Gastrocnemius medialis (tissue), 4 donors: ENCODE measurements at regions of chr6 and their contacts with region 1.

Region 1: DNA sequence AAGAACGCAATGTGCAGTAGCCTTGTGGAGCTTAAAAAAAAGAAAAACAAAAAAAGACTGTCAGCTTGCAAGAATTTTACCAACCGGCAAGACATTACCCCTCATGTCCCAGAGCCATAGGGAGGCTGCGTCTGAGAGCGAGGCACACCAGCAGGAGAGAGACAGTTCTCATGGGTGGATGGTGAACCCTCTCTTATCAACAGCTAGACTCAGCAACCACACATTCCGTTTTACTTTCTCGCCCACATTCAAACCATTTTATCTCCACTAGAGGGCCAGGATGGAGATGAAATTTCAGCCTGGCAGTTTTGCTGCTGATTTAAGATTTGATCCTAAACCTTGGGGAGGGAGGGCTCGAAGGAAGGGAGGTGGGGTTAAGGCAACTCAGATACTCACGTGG is 247.0 kb downstream of the ATXN1 start:
- DNase-seq: no peak
- ATAC-seq: peak in 1 of 2 donors; percentile 58
- H3K4me3 ChIP-seq: no peak overlapping the region
- H3K27ac ChIP-seq: no peak overlapping the region
- H3K4me1 ChIP-seq: peaks cover 37% of the 10 kb centered on the region in 2 donors
- H3K27me3 ChIP-seq: no peaks in the 10 kb centered on the region
- CTCF ChIP-seq: peak; percentile 33 to 50 (median 36)
- POLR2A ChIP-seq: no peak

Region 2: GRCh38 chr6:16649241-16649640 is 135.0 kb after region 1 on chr6:
- in situ Hi-C with region 1: no loop called
- intact Hi-C with region 1: loop called (anchors 5 kb)
- DNase-seq: no peak
- ATAC-seq: no peak
- H3K4me3 ChIP-seq: no peak overlapping the region
- H3K27ac ChIP-seq: no peak overlapping the region
- H3K4me1 ChIP-seq: peaks cover 14 to 15% of the 10 kb centered on the region in 2 donors
- H3K27me3 ChIP-seq: no peaks in the 10 kb centered on the region
- CTCF ChIP-seq: no peak
- POLR2A ChIP-seq: no peak

Region 3: DNA sequence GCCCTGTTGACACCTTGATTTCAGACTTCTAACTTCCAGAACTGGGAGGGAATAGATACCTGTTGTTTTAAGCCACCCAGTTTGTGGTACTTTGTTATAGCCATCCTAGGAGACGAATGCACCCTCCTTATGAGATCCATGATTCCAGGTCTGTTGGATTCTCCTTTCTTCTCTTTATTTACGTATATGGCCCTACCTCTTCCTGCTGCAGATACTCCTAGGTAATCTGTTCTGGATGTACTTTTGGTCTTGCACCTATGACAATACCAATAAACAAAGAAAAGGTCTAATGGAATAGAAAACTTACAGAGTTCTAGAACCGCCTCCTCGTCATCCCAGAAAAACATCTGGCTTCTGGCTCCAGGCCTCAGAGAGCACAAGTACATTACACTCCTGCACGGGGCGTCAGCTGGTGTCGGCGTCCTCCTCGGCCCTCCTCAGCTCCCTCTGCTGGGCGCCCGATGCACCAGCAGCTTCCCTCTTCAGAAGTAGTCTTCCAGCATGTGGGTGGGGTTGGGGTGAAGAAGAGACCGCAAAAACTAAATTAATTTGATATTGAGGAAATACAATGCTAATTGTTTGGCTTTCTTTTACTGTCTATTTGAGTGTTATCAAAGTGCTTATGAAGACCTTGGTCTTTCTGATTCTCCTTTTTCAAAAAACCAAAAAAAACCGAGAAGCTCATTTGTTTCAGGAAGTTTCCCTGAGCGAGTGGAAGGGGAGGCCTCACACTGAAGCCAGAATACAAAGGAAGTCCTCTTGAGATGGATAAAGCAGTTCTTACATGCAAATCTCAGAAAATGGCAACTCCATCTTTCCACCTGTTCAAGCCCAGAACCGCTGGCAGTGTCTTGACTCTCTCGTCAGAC is 256.7 kb after region 1 on chr6:
- in situ Hi-C with region 1: loop called (anchors 5 to 10 kb)
- intact Hi-C with region 1: loop called (anchors 2 kb)
- DNase-seq: peak; percentile 79 to 81
- ATAC-seq: peak; percentile 60 to 69
- H3K4me3 ChIP-seq: no peak overlapping the region
- H3K27ac ChIP-seq: peak overlapping the region; percentile 40 to 47 (median 44)
- H3K4me1 ChIP-seq: peaks cover 27 to 28% of the 10 kb centered on the region in 2 donors
- H3K27me3 ChIP-seq: no peaks in the 10 kb centered on the region
- CTCF ChIP-seq: peak; percentile 91 to 96 (median 94)
- POLR2A ChIP-seq: no peak